Activated CD4-positive, alpha-beta memory T cell treated with anti-CD3 and anti-CD28 coated beads for 36 hours (primary cell): ENCODE measurements at regions of chr2 and their contacts with region 1.

Region 1: DNA sequence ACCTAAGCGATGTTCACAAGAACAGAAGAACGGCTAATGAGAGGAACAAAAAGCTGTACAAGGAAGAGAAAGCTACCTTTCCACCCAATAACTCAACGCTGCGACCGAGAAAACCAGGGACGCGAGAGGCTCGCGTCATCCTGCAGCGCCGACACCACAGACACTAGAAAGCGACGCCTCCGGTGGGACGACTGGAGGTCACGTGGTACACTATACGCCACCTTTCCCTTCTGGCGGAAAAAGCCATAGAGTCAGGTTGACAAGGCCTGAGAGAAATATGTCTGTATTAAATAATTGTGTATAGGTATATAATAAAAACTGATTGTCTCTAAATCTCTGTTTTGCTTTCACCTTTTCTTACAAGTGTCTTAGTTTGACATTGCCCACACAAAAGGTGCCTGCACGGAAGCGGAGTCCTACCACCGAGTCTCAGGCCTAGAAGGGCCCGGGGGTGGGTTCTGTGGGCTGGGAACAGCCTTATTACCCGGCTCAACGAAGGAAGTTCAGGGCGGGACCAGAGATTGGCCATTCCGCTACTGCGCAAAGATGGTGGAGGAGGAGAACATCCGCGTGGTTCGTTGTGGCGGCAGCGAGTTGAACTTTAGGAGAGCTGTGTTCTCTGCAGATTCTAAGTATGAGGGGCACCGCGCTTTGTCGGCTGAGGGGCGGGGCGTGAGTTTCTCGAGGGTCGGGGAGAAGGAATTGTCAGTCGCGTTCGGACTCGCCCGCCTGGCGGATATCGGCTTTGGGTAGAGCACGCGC is at the start of gene WDR75:
- DNase-seq: peak; percentile 94
- H3K4me3 Mint-ChIP-seq: no peak within 1 kb of the TSS
- H3K27ac Mint-ChIP-seq: peak within 1 kb of the TSS; percentile 99
- H3K4me1 Mint-ChIP-seq: peaks cover 11% of the 10 kb centered on the region
- H3K27me3 Mint-ChIP-seq: no peaks in the 10 kb centered on the region
- total RNA-seq, gene WDR75: 66.4 to 68.8 TPM

Region 2: DNA sequence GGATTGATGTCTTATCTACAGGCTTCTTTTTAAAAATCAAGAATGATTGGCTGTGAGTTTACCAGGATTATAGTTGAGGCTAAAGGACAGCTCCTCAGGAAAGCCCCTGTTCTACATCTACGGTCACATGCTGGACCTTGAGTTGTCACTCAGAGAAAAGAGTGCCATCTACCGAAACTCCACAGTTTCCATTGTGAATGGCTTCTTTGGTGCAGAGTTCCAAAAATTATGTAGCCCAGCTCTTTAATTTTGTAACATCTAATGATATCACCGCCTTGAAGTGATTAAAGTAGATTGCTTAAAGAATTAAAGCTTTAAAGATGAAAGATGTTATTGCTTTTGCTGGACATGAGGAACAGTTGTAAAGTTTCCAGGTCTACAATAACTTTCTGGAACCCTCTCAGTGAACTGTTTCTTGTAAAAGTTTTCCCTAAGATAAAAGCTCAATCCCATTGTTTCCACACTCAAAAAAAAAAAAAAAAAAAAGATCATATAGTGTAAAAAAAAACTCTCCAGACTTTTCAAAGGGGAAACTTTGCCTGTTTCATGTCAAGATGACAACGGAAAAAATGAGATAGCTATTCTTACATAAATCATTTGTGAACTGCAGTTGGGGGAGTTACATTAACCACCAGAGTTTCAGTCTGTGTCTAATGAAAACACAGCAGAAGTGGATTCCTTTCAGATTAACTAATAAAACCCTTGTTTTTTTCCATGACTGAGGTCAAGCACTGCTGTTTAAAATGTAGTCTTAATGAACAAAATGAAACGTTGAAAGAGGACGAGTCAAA is 462.6 kb before region 1 on chr2:
- CTCF ChIA-PET with region 1: no interaction called
- POLR2A ChIA-PET with region 1: no interaction called
- intact Hi-C with region 1: loop called (anchors 2 kb)
- DNase-seq: no peak
- H3K4me3 Mint-ChIP-seq: peak overlapping the region; percentile 35
- H3K27ac Mint-ChIP-seq: peak overlapping the region; percentile 80
- H3K4me1 Mint-ChIP-seq: peaks cover 13% of the 10 kb centered on the region
- H3K27me3 Mint-ChIP-seq: peaks cover 4% of the 10 kb centered on the region

Region 3: DNA sequence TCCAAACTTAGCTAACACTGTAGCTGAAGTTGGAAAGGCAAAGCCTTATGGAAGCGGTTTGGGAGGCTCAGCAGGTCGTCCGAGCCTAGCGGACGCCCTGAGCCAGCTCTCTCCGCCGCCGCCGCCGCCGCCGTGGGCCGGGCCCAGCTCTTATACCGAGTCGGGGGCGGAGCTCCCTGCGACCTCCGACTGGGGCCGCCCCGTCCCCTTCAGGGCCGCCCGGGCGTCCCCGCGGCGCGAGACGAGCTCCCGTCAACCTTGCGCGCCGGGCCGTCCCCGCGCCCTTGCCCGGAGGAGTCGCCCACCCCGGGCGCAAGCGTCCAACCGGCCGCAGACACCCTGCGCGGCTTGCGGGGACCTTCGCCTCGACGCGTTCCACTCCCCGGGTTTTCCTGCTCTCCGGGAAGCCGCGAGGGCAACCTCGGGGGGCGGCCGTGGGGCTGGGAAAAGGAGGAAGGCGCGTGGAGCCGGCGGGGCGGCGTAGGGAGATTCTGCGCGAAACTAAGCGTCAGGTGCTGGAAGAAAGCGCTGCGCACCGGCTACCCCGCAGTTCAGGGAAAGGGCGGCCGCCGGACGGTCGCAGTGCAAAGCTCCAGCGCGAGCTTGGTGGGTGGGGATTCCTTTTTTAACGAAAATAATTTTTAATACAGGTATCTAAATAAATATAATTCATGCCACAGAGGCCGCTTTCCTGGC is 139.7 kb after region 1 on chr2 and contains the start of gene SLC40A1:
- CTCF ChIA-PET with region 1: no interaction called
- POLR2A ChIA-PET with region 1: interaction called, 6 read pairs
- intact Hi-C with region 1: loop called (anchors 1 kb)
- DNase-seq: peak; percentile 75
- H3K4me3 Mint-ChIP-seq: peak within 1 kb of the TSS; percentile 83
- H3K27ac Mint-ChIP-seq: peak within 1 kb of the TSS; percentile 77
- H3K4me1 Mint-ChIP-seq: peaks cover 42% of the 10 kb centered on the region
- H3K27me3 Mint-ChIP-seq: peaks cover 4% of the 10 kb centered on the region
- total RNA-seq, gene SLC40A1: 4.7 to 4.8 TPM

Region 4: DNA sequence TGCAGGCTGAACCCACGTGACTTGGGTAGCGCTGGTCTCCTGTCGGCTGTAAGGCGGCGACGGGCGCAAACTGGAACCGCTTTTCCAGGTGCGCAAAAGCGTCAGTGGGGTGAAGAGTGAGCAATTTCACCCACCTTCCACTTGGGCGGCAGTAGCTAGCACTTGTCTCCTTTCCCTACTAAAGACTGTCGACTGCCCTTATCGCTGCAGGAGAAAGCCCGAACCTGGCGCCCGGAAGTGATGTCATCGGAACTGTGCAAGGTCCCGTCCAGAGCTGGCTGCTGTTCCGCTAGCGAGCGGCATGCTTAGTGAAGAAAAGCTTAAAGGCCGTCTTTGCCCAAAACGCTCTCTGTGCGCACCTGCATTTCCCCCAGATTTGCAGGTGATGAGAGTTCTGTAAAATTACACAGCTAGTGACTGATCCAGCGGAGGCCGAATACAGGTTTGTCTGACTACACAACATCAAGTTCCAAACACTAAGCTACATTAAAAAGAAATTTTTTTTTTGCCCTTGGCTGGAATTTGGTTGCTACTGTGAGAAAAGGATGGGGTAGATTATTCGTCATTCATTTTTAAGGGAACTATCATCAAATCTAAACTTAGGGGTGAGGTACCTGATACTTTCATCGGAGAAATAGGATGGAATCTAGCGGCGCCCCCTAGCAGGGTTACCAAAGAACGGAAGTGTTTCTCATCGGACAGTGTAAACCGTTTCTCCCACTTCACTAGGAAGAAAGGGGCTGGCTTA is 321.6 kb after region 1 on chr2 and contains the start of gene OSGEPL1:
- CTCF ChIA-PET with region 1: interaction called, 3 read pairs
- POLR2A ChIA-PET with region 1: interaction called, 5 read pairs
- intact Hi-C with region 1: loop called (anchors 1 kb)
- DNase-seq: peak; percentile 95
- H3K4me3 Mint-ChIP-seq: peak within 1 kb of the TSS; percentile 91
- H3K27ac Mint-ChIP-seq: peak within 1 kb of the TSS; percentile 96
- H3K4me1 Mint-ChIP-seq: peaks cover 9% of the 10 kb centered on the region
- H3K27me3 Mint-ChIP-seq: no peaks in the 10 kb centered on the region
- total RNA-seq, gene OSGEPL1: 11.1 to 11.7 TPM

Region 5: DNA sequence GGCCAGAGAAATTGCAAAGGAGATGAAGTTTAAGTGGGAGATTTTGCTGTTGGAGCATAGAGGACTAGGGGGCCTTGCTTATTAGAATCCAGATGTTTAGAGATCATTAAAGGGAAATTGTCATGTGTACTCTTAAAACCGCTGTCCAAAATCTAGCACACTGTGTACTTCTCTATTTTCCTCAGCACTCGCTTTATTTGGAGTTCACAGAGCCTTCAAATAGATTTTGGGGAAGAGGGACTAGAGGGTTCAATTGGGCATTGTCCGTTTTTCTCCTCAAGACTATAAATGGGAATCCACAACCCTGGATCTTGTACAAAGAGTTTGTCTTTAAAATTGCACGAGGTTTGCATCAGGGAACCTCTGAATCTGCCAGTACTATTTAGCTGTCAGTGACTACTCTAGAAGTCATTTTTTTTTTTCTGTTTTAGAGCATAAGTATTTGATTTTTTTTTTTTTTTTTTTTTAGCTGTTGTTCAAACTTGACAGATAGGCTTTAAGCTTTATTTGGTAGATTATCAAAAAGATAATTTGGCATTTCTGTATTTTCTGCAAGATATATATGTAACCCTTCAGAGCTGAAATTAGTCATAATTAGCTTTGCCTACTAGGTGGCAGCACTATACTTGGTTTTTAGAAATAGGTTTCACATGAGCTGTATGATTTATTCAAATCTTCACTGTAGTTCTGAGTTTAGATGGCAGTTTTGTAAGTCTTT is 357.3 kb after region 1 on chr2:
- CTCF ChIA-PET with region 1: no interaction called
- POLR2A ChIA-PET with region 1: no interaction called
- intact Hi-C with region 1: no loop called
- DNase-seq: no peak
- H3K4me3 Mint-ChIP-seq: no peak overlapping the region
- H3K27ac Mint-ChIP-seq: no peak overlapping the region
- H3K4me1 Mint-ChIP-seq: peaks cover 3% of the 10 kb centered on the region
- H3K27me3 Mint-ChIP-seq: no peaks in the 10 kb centered on the region

Region 6: DNA sequence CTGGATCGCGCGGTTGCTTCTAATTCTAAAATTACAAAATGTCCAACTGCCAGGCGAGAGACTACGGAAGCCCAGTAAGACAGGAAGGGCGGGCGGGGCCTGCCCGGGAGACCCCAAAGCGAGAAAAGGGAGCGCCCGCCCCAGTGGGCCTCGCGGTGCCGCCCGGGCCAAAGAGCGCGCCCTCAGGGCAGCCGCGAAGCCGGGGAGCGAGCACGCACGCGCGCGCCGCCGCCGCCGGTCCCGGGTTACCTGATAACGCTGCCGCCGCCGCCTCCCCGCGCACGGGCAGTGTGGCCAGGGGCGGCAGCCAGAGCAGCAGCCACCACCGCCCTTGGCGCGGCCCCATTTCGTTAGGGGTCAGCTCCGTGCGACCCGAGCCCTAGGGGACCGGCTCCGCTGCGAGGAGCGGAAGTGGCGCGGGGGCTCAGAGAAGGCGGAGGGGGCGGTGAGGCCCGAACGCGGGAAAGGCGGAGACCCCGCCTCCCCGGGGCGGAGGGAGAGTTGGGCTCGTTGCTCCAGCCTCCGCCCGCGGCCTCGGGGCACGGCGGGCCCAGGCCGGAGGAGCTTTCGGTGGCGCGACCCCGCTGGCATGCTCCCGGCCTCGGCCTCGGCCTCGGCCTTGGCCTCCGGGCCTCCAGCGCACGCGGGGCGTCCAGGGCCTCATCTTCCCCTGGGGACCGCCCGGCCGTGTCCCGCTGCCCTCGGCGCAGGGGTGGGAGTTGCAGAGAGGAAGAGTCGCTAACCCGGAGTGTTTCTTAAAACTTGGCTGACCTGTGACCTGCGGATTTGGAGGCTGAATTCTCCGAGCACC is 1093.4 kb after region 1 on chr2 and contains the start of gene NEMP2:
- CTCF ChIA-PET with region 1: no interaction called
- POLR2A ChIA-PET with region 1: no interaction called
- intact Hi-C with region 1: loop called (anchors 5 kb)
- DNase-seq: peak; percentile 86
- H3K4me3 Mint-ChIP-seq: peak within 1 kb of the TSS; percentile 95
- H3K27ac Mint-ChIP-seq: peak within 1 kb of the TSS; percentile 99
- H3K4me1 Mint-ChIP-seq: peaks cover 57% of the 10 kb centered on the region
- H3K27me3 Mint-ChIP-seq: no peaks in the 10 kb centered on the region
- total RNA-seq, gene NEMP2: 28.8 to 30.0 TPM